CD8-positive, alpha-beta T cell (primary cell): ENCODE measurements at regions of chrX and their contacts with region 1.

Region 1: DNA sequence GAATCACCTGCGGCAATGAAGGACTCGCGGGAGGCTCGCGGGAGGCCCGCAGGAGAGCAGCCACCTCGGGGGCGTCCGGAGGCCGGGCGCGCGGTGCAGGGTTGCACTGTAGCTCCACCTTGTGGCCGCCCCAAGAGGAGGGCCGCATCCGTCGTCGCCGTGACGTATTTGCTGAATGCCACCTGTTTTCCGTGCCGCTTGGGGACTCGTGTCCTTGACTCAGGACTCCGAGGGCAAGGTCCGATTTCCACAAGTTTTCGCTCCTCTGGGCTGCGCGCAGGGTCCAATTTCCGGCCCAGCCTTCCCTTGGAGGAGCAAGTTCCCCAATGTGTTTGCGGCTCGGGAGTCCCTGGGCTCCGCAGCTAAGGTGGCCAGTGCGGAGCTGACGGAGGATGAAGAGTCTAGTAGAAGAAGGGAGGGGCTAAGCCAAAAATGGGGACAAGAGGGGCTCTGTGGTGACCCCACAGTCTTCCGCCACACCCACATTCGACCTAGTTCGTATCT is 10.7 kb upstream of the DLG3 start:
- DNase-seq: peak; percentile 51 to 87 (median 72)
- ATAC-seq: peak; percentile 79
- H3K4me3 ChIP-seq: peak overlapping the region; percentile 70 to 86
- H3K4me3 Mint-ChIP-seq: peak overlapping the region; percentile 90
- H3K27ac ChIP-seq: peak overlapping the region; percentile 72 to 83
- H3K27ac Mint-ChIP-seq: peak overlapping the region; percentile 94
- H3K4me1 ChIP-seq: peaks cover 4% of the 10 kb centered on the region
- H3K4me1 Mint-ChIP-seq: peaks cover 16% of the 10 kb centered on the region
- H3K27me3 ChIP-seq: no peaks in the 10 kb centered on the region
- H3K27me3 Mint-ChIP-seq: no peaks in the 10 kb centered on the region
- CTCF ChIP-seq: peak; percentile 63

Region 2: GRCh38 chrX:70196961-70197805 is 236.7 kb before region 1 on chrX:
- CTCF ChIA-PET with region 1: interaction called, 9 read pairs
- POLR2A ChIA-PET with region 1: no interaction called
- intact Hi-C with region 1: loop called in 1 of 2 experiments (anchors 1 kb)
- DNase-seq: peak; percentile 36 to 76 (median 64)
- ATAC-seq: peak; percentile 94
- H3K4me3 ChIP-seq: no peak overlapping the region
- H3K4me3 Mint-ChIP-seq: no peak overlapping the region
- H3K27ac ChIP-seq: no peak overlapping the region
- H3K27ac Mint-ChIP-seq: no peak overlapping the region
- H3K4me1 ChIP-seq: no peaks in the 10 kb centered on the region
- H3K4me1 Mint-ChIP-seq: peaks cover 2% of the 10 kb centered on the region
- H3K27me3 ChIP-seq: no peaks in the 10 kb centered on the region
- H3K27me3 Mint-ChIP-seq: peaks cover 5% of the 10 kb centered on the region
- CTCF ChIP-seq: peak; percentile 59

Region 3: DNA sequence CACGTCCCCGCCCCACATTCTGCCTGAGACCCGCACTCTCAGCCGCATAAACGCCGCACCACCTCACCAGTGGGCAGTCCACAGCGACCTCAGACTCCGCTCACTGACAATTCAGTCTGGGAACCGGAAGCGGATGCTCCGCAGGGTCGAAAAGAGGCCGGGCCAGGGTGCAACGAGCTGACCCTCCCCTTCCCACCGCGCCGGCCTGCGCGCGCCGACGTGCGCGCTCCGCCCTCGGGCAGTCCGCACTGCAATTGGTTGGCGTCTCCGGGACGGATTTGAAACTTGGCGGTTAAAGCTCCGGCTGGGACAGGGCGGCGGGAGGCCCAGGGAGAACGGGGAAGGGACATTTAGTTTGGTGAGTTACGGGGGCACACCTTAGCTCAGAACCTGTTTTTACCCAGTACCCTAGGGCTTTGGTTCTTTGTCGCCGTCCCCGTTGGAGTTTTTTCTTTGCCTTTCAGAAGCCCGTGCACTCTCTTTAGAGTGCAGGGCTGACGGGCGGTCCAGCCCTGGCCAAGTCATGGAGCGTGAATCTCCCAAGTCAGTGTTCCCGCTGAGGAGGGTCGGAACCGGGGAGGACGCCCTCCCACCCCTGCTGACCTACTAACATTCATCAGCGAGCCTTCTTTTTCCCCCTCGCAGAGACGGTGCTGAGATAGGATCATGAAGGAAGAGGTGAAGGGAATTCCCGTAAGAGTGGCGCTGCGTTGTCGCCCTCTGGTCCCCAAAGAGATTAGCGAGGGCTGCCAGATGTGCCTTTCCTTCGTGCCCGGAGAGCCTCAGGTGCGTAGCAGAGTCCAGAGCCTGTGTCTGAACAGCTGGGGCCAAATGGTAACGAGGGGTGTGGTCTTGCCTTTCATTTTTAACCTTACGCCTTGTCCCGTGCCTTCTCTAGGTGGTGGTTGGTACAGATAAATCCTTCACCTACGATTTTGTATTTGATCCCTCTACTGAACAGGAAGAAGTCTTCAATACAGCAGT is 143.8 kb before region 1 on chrX and contains the starts of genes KIF4A and PDZD11:
- CTCF ChIA-PET with region 1: no interaction called
- POLR2A ChIA-PET with region 1: interaction called, 4 read pairs
- intact Hi-C with region 1: loop called (anchors 1 kb)
- DNase-seq: peak; percentile 51 to 86 (median 70)
- ATAC-seq: peak; percentile 97
- H3K4me3 ChIP-seq: peak within 1 kb of the TSS; percentile 64 to 69
- H3K4me3 Mint-ChIP-seq: peak within 1 kb of the TSS; percentile 87
- H3K27ac ChIP-seq: peak within 1 kb of the TSS; percentile 61 to 75
- H3K27ac Mint-ChIP-seq: peak within 1 kb of the TSS; percentile 85
- H3K4me1 ChIP-seq: peaks cover 5% of the 10 kb centered on the region
- H3K4me1 Mint-ChIP-seq: peaks cover 21% of the 10 kb centered on the region
- H3K27me3 ChIP-seq: no peaks in the 10 kb centered on the region
- H3K27me3 Mint-ChIP-seq: no peaks in the 10 kb centered on the region
- CTCF ChIP-seq: no peak
- total RNA-seq, gene KIF4A: not detected
- total RNA-seq, gene PDZD11: 3.4 to 5.1 TPM

Region 4: DNA sequence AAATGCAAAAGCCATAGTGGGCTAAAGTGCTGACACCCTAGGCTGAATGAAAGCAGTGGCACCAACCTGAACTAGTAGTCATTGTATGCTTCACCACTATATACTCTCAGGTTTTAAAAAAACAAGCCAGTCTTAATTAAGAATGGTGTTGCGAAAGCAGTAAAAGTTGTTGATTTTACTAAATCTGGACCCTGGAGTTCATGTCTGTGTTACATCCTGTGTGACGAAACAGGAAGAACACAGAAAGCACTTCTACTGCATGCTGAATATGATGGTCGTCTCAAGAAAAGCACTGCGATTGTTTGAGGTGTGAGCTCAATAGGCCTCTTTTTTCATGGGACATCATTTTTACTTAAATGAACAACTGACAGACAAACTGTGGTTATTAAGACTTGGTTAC is 35.0 kb before region 1 on chrX:
- CTCF ChIA-PET with region 1: no interaction called
- POLR2A ChIA-PET with region 1: no interaction called
- intact Hi-C with region 1: loop called (anchors 2 kb)
- DNase-seq: peak in 3 of 9 experiments; percentile 35 to 82 (median 69)
- ATAC-seq: peak; percentile 93
- H3K4me3 ChIP-seq: no peak overlapping the region
- H3K4me3 Mint-ChIP-seq: peak overlapping the region; percentile 23
- H3K27ac ChIP-seq: peak overlapping the region; percentile 72 to 77
- H3K27ac Mint-ChIP-seq: peak overlapping the region; percentile 98
- H3K4me1 ChIP-seq: peaks cover 6% of the 10 kb centered on the region
- H3K4me1 Mint-ChIP-seq: peaks cover 10% of the 10 kb centered on the region
- H3K27me3 ChIP-seq: no peaks in the 10 kb centered on the region
- H3K27me3 Mint-ChIP-seq: no peaks in the 10 kb centered on the region
- CTCF ChIP-seq: no peak

Region 5: GRCh38 chrX:70454441-70455365 is 20.8 kb after region 1 on chrX:
- CTCF ChIA-PET with region 1: interaction called, 4 read pairs
- POLR2A ChIA-PET with region 1: interaction called, 7 read pairs
- intact Hi-C with region 1: loop called (anchors 1 to 2 kb)
- DNase-seq: peak; percentile 33 to 85 (median 66)
- ATAC-seq: peak; percentile 68
- H3K4me3 ChIP-seq: peak overlapping the region; percentile 62
- H3K4me3 Mint-ChIP-seq: peak overlapping the region; percentile 82
- H3K27ac ChIP-seq: peak overlapping the region; percentile 23 to 74
- H3K27ac Mint-ChIP-seq: peak overlapping the region; percentile 86
- H3K4me1 ChIP-seq: peaks cover 26% of the 10 kb centered on the region
- H3K4me1 Mint-ChIP-seq: peaks cover 39% of the 10 kb centered on the region
- H3K27me3 ChIP-seq: no peaks in the 10 kb centered on the region
- H3K27me3 Mint-ChIP-seq: no peaks in the 10 kb centered on the region
- CTCF ChIP-seq: peak; percentile 57